Activated CD8-positive, alpha-beta memory T cell treated with anti-CD3 and anti-CD28 coated beads, Interleukin-2, amount 10 ng/mL, durations not matched to agents 7 days and 5 days (primary cell): ENCODE measurements at regions of chr5 and their contacts with region 1.

Region 1: DNA sequence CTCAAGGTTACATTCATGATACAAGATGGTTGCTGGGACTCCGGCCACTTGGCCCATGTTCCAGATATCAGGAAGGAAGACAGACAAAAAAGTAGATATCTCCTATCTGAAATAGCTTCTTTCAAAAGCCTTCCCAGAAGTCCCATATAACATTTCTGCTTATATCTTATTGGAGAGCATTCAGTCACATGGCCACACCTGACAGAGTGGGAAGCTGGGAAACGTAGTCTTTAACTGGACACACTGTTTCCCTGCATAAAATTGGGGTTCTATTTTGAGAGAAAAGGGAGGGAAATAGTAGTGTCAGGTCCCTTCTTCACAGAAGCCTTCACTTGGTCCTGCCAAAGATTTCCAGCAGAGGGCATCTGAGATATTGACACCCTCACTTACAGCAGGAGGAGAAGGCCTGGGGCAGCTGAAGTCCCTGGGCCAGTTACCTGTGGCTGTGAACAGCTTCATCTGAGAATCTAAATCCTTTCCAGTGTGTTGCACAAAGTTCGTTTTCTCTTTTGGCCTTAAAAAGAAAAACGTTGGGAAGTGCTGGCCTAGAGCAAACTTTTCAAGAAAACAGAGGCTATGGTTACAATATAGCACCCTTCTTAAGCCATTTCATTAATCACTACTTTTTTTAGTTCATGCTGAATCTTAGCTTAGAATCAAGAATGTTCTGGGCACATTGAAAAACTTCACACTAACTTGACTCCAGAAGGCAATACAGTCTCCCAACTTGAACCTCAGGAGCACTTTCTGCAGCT is 33.5 kb downstream of the SPEF2 start:
- DNase-seq: peak; percentile 79
- ATAC-seq: peak; percentile 98
- H3K4me3 Mint-ChIP-seq: no peak overlapping the region
- H3K27ac Mint-ChIP-seq: no peak overlapping the region
- H3K4me1 Mint-ChIP-seq: peaks cover 16% of the 10 kb centered on the region
- H3K27me3 Mint-ChIP-seq: no peaks in the 10 kb centered on the region

Region 2: GRCh38 chr5:35608881-35609779 is 42.0 kb before region 1 on chr5:
- CTCF ChIA-PET with region 1: no interaction called
- DNase-seq: no peak
- ATAC-seq: no peak
- H3K4me3 Mint-ChIP-seq: no peak overlapping the region
- H3K27ac Mint-ChIP-seq: no peak overlapping the region
- H3K4me1 Mint-ChIP-seq: no peaks in the 10 kb centered on the region
- H3K27me3 Mint-ChIP-seq: peaks cover 11% of the 10 kb centered on the region

Region 3: DNA sequence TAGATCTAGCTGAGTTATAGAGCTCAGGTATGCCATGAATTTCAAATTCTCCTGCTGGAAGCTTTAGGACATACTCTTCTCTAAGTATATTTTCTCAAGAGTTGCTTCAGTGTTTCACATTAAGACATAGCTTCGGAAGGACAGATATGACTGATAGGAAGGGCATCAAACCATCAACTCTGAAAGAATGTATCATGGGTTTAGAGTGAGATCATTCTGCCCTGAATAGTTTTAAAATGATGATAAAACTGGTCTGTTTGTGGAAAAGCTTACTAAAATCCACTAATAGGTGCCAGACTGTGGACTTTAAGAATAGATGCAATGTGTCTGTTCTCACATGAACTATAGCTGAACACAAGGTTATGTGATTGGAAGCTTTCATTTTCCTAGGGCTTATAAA is 25.1 kb before region 1 on chr5:
- CTCF ChIA-PET with region 1: interaction called, 13 read pairs
- DNase-seq: no peak
- ATAC-seq: peak; percentile 66
- H3K4me3 Mint-ChIP-seq: peak overlapping the region; percentile 11
- H3K27ac Mint-ChIP-seq: peak overlapping the region; percentile 66
- H3K4me1 Mint-ChIP-seq: peaks cover 39% of the 10 kb centered on the region
- H3K27me3 Mint-ChIP-seq: no peaks in the 10 kb centered on the region

Region 4: GRCh38 chr5:35672995-35673394 is 21.8 kb after region 1 on chr5:
- CTCF ChIA-PET with region 1: interaction called, 30 read pairs
- DNase-seq: peak; percentile 78
- ATAC-seq: peak; percentile 90
- H3K4me3 Mint-ChIP-seq: peak overlapping the region; percentile 30
- H3K27ac Mint-ChIP-seq: peak overlapping the region; percentile 92
- H3K4me1 Mint-ChIP-seq: peaks cover 57% of the 10 kb centered on the region
- H3K27me3 Mint-ChIP-seq: no peaks in the 10 kb centered on the region

Region 5: DNA sequence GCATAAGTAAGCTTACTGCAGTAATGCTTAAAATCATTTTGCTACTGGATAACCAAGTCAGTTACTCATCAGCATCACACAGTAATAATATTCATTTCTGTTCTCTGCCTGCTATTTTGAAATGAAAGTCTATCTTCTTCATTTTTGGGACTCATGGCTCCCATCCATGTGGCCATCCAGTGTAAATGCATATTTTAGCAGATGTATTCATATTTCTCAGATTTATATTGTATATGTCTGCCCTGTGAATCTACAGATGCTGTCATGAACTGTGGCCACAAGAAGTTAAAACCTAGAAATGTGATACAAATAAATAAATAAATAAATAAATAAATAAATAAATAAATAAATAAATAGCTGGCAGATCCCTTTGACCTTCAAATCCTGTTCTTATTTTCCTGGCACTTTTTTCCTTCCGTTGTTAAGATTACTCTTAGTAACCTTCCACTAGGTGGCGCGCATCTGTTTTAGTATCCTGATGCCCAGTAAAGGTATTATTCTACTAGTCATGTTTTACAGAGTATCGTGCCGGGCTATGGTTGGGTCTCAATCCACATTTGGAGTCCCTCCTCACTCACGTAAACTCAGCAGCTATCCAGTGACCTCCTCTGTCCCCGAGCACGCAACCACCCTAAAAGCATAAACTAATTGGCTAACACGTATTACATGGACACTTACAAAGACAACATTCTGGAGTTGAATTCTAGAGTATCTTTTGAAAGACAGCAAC is 126.3 kb after region 1 on chr5:
- CTCF ChIA-PET with region 1: interaction called, 16 read pairs
- DNase-seq: peak; percentile 82
- ATAC-seq: peak; percentile 69
- H3K4me3 Mint-ChIP-seq: no peak overlapping the region
- H3K27ac Mint-ChIP-seq: peak overlapping the region; percentile 77
- H3K4me1 Mint-ChIP-seq: peaks cover 63% of the 10 kb centered on the region
- H3K27me3 Mint-ChIP-seq: no peaks in the 10 kb centered on the region

Region 6: DNA sequence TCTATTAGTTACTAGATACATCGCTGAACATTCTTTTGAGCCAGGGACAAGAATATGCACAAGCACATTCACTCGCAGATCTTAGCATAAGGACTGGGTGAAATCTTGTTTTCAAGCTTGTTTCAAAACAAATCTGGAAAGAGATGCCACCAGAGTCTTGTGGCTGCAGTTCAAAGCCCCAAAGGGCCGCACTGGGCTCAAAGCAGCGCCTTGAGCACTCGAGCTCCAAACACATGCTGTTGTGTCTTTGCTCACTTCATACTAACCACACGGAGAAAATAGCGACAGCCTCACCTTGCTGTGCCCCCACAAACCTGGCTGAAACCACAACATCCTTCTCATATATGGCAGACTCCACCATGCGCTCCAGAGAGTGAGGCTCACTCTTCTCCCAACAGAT is 171.3 kb after region 1 on chr5:
- CTCF ChIA-PET with region 1: interaction called, 10 read pairs
- DNase-seq: peak; percentile 73
- ATAC-seq: peak; percentile 55
- H3K4me3 Mint-ChIP-seq: peak overlapping the region; percentile 17
- H3K27ac Mint-ChIP-seq: peak overlapping the region; percentile 71
- H3K4me1 Mint-ChIP-seq: peaks cover 87% of the 10 kb centered on the region
- H3K27me3 Mint-ChIP-seq: no peaks in the 10 kb centered on the region

Region 7: GRCh38 chr5:35857606-35858205 is 206.5 kb after region 1 on chr5:
- CTCF ChIA-PET with region 1: interaction called, 12 read pairs
- DNase-seq: no peak
- ATAC-seq: no peak
- H3K4me3 Mint-ChIP-seq: peak overlapping the region; percentile 80
- H3K27ac Mint-ChIP-seq: peak overlapping the region; percentile 90
- H3K4me1 Mint-ChIP-seq: peaks cover 95% of the 10 kb centered on the region
- H3K27me3 Mint-ChIP-seq: no peaks in the 10 kb centered on the region